B cell (primary cell): ENCODE measurements at regions of chr22 and their contacts with region 1.

Region 1: GRCh38 chr22:40436505-40437451 is 66.4 kb downstream of the SGSM3 start:
- DNase-seq: peak; percentile 84
- ATAC-seq: peak; percentile 67
- H3K4me3 ChIP-seq: peak overlapping the region; percentile 6 to 44 (median 32)
- H3K4me3 Mint-ChIP-seq: peak overlapping the region; percentile 82
- H3K27ac ChIP-seq: peak overlapping the region; percentile 61 to 69
- H3K27ac Mint-ChIP-seq: peak overlapping the region; percentile 94
- H3K4me1 ChIP-seq: peaks cover 83 to 99% of the 10 kb centered on the region in 2 donors
- H3K4me1 Mint-ChIP-seq: peaks cover 87% of the 10 kb centered on the region
- H3K27me3 ChIP-seq: no peaks in the 10 kb centered on the region
- H3K27me3 Mint-ChIP-seq: no peaks in the 10 kb centered on the region
- CTCF ChIP-seq: peak; percentile 82

Region 2: DNA sequence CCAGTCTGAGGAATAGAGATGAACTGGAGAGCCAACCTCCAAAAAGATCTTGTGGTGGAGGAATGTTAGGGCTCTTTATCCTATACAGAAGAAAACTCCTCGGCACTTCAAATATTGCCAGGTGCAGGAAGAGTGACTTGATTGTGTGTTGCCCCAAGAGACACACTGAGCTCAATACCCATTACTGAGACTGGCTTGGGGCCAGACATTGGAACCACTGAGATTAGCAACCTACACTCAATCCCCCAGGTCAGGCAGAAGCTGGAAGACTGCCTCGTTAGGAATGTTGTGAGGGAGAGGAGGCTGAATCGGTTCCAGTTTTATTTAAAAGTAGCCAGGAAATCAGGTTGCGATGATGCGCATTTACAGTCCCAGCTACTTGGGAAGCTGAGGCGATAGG is 68.8 kb before region 1 on chr22:
- CTCF ChIA-PET with region 1: interaction called, 8 read pairs
- POLR2A ChIA-PET with region 1: interaction called, 6 read pairs
- intact Hi-C with region 1: loop called (anchors 1 kb)
- DNase-seq: no peak
- ATAC-seq: no peak
- H3K4me3 ChIP-seq: no peak overlapping the region
- H3K4me3 Mint-ChIP-seq: no peak overlapping the region
- H3K27ac ChIP-seq: no peak overlapping the region
- H3K27ac Mint-ChIP-seq: peak overlapping the region; percentile 26
- H3K4me1 ChIP-seq: peaks cover 6 to 9% of the 10 kb centered on the region in 2 donors
- H3K4me1 Mint-ChIP-seq: peaks cover 18% of the 10 kb centered on the region
- H3K27me3 ChIP-seq: no peaks in the 10 kb centered on the region
- H3K27me3 Mint-ChIP-seq: no peaks in the 10 kb centered on the region
- CTCF ChIP-seq: no peak

Region 3: GRCh38 chr22:40418366-40419201 is 18.2 kb before region 1 on chr22:
- CTCF ChIA-PET with region 1: interaction called, 51 read pairs
- POLR2A ChIA-PET with region 1: interaction called, 7 read pairs
- intact Hi-C with region 1: loop called (anchors 1 kb)
- DNase-seq: peak; percentile 62
- ATAC-seq: peak; percentile 20
- H3K4me3 ChIP-seq: no peak overlapping the region
- H3K4me3 Mint-ChIP-seq: no peak overlapping the region
- H3K27ac ChIP-seq: peak overlapping the region; percentile 16 to 17
- H3K27ac Mint-ChIP-seq: peak overlapping the region; percentile 64
- H3K4me1 ChIP-seq: peaks cover 54 to 64% of the 10 kb centered on the region in 2 donors
- H3K4me1 Mint-ChIP-seq: peaks cover 60% of the 10 kb centered on the region
- H3K27me3 ChIP-seq: no peaks in the 10 kb centered on the region
- H3K27me3 Mint-ChIP-seq: no peaks in the 10 kb centered on the region
- CTCF ChIP-seq: no peak

Region 4: DNA sequence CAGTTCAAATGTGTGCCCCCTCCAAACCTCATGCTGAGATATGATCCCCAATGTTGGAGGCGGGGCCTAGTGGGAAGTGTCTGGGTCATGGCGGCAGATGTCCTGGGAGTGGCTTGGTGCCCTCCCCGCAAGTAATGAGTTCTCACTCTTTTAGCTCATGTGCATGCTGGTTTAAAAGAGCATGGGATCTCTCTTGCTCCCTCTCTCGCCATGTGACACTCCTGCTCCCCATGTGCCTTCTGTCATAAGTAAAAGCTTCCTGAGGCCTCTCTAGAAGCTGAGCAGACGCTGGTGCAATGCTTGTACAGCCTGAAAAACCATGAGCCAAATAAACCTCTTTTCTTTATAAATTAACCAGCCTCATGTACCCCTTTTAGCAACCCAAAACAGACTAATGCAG is 32.4 kb after region 1 on chr22:
- CTCF ChIA-PET with region 1: interaction called, 20 read pairs
- POLR2A ChIA-PET with region 1: no interaction called
- intact Hi-C with region 1: no loop called
- DNase-seq: no peak
- ATAC-seq: no peak
- H3K4me3 ChIP-seq: no peak overlapping the region
- H3K4me3 Mint-ChIP-seq: no peak overlapping the region
- H3K27ac ChIP-seq: no peak overlapping the region
- H3K27ac Mint-ChIP-seq: no peak overlapping the region
- H3K4me1 ChIP-seq: peaks cover under 1 to 2% of the 10 kb centered on the region in 2 donors
- H3K4me1 Mint-ChIP-seq: peaks cover 6% of the 10 kb centered on the region
- H3K27me3 ChIP-seq: no peaks in the 10 kb centered on the region
- H3K27me3 Mint-ChIP-seq: no peaks in the 10 kb centered on the region
- CTCF ChIP-seq: no peak

Region 5: GRCh38 chr22:40533712-40534378 is 97.1 kb after region 1 on chr22:
- CTCF ChIA-PET with region 1: interaction called, 16 read pairs
- POLR2A ChIA-PET with region 1: no interaction called
- intact Hi-C with region 1: no loop called
- DNase-seq: peak; percentile 66
- ATAC-seq: peak; percentile 86
- H3K4me3 ChIP-seq: peak overlapping the region in 3 of 5 experiments; percentile 20 to 25 (median 21)
- H3K4me3 Mint-ChIP-seq: peak overlapping the region; percentile 53
- H3K27ac ChIP-seq: peak overlapping the region in 1 of 2 donors; percentile 72
- H3K27ac Mint-ChIP-seq: peak overlapping the region; percentile 43
- H3K4me1 ChIP-seq: peaks cover 31 to 46% of the 10 kb centered on the region in 2 donors
- H3K4me1 Mint-ChIP-seq: peaks cover 53% of the 10 kb centered on the region
- H3K27me3 ChIP-seq: no peaks in the 10 kb centered on the region
- H3K27me3 Mint-ChIP-seq: no peaks in the 10 kb centered on the region
- CTCF ChIP-seq: no peak

Region 6: GRCh38 chr22:40567106-40567505 is 130.3 kb after region 1 on chr22:
- CTCF ChIA-PET with region 1: no interaction called
- POLR2A ChIA-PET with region 1: no interaction called
- intact Hi-C with region 1: no loop called
- DNase-seq: no peak
- ATAC-seq: no peak
- H3K4me3 ChIP-seq: no peak overlapping the region
- H3K4me3 Mint-ChIP-seq: no peak overlapping the region
- H3K27ac ChIP-seq: no peak overlapping the region
- H3K27ac Mint-ChIP-seq: no peak overlapping the region
- H3K4me1 ChIP-seq: no peaks in the 10 kb centered on the region
- H3K4me1 Mint-ChIP-seq: peaks cover 6% of the 10 kb centered on the region
- H3K27me3 ChIP-seq: no peaks in the 10 kb centered on the region
- H3K27me3 Mint-ChIP-seq: no peaks in the 10 kb centered on the region
- CTCF ChIP-seq: no peak

Region 7: GRCh38 chr22:40612291-40612740 is 175.5 kb after region 1 on chr22:
- CTCF ChIA-PET with region 1: no interaction called
- POLR2A ChIA-PET with region 1: no interaction called
- intact Hi-C with region 1: no loop called
- DNase-seq: no peak
- ATAC-seq: no peak
- H3K4me3 ChIP-seq: no peak overlapping the region
- H3K4me3 Mint-ChIP-seq: no peak overlapping the region
- H3K27ac ChIP-seq: no peak overlapping the region
- H3K27ac Mint-ChIP-seq: no peak overlapping the region
- H3K4me1 ChIP-seq: peaks cover 0 to 3% of the 10 kb centered on the region in 2 donors
- H3K4me1 Mint-ChIP-seq: peaks cover 29% of the 10 kb centered on the region
- H3K27me3 ChIP-seq: no peaks in the 10 kb centered on the region
- H3K27me3 Mint-ChIP-seq: no peaks in the 10 kb centered on the region
- CTCF ChIP-seq: no peak

Region 8: DNA sequence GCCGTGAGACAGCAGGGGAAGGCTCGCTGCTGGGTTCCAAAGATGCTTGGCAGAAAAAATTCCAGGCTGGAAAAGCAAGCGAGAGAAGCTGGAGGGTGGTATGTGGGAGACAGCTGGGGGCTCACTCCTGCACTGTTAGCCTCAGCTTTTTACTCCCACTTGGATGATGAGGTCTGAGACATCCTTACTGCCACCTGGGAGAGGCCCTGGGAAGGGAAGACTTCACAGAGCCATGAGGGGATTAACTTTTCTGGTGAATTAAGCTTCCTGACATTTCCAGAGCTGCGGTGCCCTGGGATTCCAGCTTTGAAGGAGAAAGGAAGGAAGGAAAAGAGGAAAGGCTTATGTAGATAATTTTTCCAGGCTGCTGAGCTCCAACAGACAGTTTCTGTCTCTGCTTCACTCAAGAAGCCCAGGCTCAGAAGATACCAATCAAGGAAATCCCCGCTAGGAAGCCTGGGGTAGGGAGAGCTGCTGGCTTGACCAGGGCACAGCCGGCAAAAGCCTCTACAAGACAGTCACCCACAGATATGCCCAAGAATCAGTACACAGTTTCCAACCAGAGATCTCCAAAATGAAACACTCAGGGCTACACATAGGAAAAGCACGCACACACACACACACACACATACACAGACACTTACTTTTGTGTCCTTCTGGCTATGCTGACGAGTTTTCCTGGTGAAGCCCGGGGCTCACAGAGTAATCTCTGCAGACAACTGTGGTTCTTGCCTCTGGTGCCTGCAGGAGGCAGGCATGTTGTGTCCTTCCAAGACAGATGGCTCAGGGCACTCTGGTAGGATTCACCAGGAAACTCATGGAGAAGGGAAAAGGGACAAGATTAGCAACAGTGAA is 243.4 kb after region 1 on chr22:
- CTCF ChIA-PET with region 1: interaction called, 6 read pairs
- POLR2A ChIA-PET with region 1: no interaction called
- intact Hi-C with region 1: loop called (anchors 1 kb)
- DNase-seq: no peak
- ATAC-seq: no peak
- H3K4me3 ChIP-seq: no peak overlapping the region
- H3K4me3 Mint-ChIP-seq: no peak overlapping the region
- H3K27ac ChIP-seq: no peak overlapping the region
- H3K27ac Mint-ChIP-seq: no peak overlapping the region
- H3K4me1 ChIP-seq: peaks cover 4 to 7% of the 10 kb centered on the region in 2 donors
- H3K4me1 Mint-ChIP-seq: peaks cover 10% of the 10 kb centered on the region
- H3K27me3 ChIP-seq: peaks cover 0 to 22% (median 10%) of the 10 kb centered on the region in 4 experiments
- H3K27me3 Mint-ChIP-seq: peaks cover 29% of the 10 kb centered on the region
- CTCF ChIP-seq: no peak